ENCODE measurements at regions of chr22 and their contacts with region 1.

Region 1: DNA sequence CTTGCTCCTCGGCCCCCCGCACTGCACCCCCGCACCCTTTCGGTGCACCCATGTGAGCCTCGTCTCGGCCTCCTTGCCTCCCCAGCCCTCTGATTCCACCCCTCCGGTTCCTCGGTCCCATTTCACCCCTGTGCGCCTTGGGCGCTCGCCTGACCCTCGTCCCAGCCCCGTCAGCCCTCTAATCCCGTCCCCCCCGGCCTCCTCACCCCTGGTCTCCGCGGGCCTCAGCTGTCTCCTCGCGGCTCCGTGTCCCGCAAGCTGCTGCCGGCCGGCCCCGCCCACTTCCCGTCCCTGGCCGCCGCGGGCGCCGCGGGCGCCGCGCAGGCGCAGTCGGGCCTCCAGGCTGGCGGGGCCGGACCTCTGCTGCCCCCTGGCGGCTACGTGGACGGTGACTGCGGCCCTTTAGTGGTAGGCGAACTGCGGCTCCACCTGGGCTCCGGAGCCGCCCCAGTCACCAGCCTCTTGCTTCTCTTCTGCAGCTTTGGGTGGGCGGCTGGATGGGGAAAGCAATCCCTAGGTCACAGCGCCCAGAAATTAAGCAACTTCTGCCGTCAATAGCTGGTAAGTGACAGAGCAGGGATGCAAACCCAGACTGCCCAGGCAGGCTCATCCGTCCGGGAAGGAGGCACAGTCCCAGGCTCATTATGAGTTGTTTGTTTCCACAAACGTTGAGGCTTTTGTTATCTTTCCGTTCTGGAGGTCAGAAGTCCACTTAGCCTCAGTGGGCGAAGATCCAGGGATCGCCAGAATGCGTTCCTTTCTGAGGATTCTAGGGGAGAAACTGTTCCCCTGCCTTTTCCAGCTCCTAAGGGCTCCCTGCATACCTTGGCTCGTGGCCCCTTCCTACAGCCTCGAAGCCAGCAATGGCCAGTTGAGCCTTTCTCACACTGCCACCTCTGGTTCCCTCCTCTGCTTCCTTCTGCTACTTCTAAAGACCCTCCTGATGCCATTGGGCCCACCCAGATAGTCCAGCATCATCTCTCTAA is at the start of gene PPM1F:
- DNase-seq: peak; percentile 88
- H3K4me3 Mint-ChIP-seq: peak within 1 kb of the TSS; percentile 79
- H3K27ac Mint-ChIP-seq: peak within 1 kb of the TSS; percentile 79
- H3K4me1 Mint-ChIP-seq: peaks cover 6% of the 10 kb centered on the region
- H3K27me3 Mint-ChIP-seq: no peaks in the 10 kb centered on the region
- total RNA-seq, gene PPM1F: 28.5 and 28.7 TPM in 2 replicates

Region 2: GRCh38 chr22:21666786-21667185 is 286.1 kb before region 1 on chr22:
- intact Hi-C with region 1: loop called (anchors 5 kb)
- DNase-seq: no peak
- H3K4me3 Mint-ChIP-seq: peak overlapping the region; percentile 99
- H3K27ac Mint-ChIP-seq: peak overlapping the region; percentile 97
- H3K4me1 Mint-ChIP-seq: peaks cover 30% of the 10 kb centered on the region
- H3K27me3 Mint-ChIP-seq: no peaks in the 10 kb centered on the region

Region 3: GRCh38 chr22:21712894-21713712 is 239.8 kb before region 1 on chr22:
- intact Hi-C with region 1: loop called (anchors 2 kb)
- DNase-seq: peak; percentile 36
- H3K4me3 Mint-ChIP-seq: no peak overlapping the region
- H3K27ac Mint-ChIP-seq: no peak overlapping the region
- H3K4me1 Mint-ChIP-seq: peaks cover 7% of the 10 kb centered on the region
- H3K27me3 Mint-ChIP-seq: peaks cover 9% of the 10 kb centered on the region

Region 4: GRCh38 chr22:21726650-21727049 is 226.2 kb before region 1 on chr22:
- intact Hi-C with region 1: loop called (anchors 5 kb)
- DNase-seq: peak; percentile 38
- H3K4me3 Mint-ChIP-seq: no peak overlapping the region
- H3K27ac Mint-ChIP-seq: no peak overlapping the region
- H3K4me1 Mint-ChIP-seq: peaks cover 16% of the 10 kb centered on the region
- H3K27me3 Mint-ChIP-seq: no peaks in the 10 kb centered on the region

Region 5: GRCh38 chr22:21816787-21817496 is 135.9 kb before region 1 on chr22:
- intact Hi-C with region 1: loop called (anchors 5 kb)
- DNase-seq: peak; percentile 42
- H3K4me3 Mint-ChIP-seq: peak overlapping the region; percentile 65
- H3K27ac Mint-ChIP-seq: peak overlapping the region; percentile 96
- H3K4me1 Mint-ChIP-seq: peaks cover 47% of the 10 kb centered on the region
- H3K27me3 Mint-ChIP-seq: no peaks in the 10 kb centered on the region

Region 6: DNA sequence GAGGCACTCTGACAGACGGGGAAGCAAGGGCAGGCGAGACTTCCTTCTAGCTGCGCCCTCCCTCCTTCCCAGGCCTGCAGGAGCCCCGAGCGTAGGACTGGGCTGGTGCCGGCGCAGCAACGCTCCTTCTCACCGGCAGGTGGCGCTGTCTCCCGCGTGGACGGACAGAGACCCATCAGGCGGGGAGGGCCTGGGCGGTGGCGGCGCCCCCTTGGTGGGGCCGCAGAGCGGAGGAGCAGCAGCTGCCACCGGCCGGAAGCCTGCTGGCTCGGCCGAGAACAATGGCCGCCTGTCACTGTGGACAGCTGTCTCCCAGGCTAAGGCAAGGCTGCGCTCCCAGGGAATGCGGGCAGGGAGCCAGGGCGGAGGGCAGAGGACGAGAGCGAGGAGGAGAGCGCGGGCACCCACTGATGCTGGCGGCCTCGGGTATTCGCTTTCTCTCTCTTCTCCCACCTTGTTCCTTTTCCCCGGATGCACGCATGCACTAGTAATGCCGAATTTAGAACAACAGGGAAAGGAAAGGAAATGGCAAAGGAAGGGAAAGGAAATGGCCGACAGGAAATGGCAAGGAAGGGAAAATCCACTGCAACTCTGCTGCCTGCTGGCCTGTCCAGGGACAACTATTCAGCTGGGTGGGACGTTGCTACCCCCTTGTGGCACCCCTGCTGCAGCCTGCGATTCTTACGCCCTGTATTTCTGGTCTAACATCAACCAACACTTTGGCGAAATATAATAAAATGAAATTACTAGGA is 14.6 kb before region 1 on chr22:
- intact Hi-C with region 1: loop called (anchors 2 kb)
- DNase-seq: peak; percentile 87
- H3K4me3 Mint-ChIP-seq: peak overlapping the region; percentile 75
- H3K27ac Mint-ChIP-seq: peak overlapping the region; percentile 67
- H3K4me1 Mint-ChIP-seq: peaks cover 44% of the 10 kb centered on the region
- H3K27me3 Mint-ChIP-seq: peaks cover 1% of the 10 kb centered on the region

Measured in activated T-helper 1 cell treated with anti-CD3 and anti-CD28 coated beads, Interleukin-12 subunit alpha, Interleukin-12 subunit beta, Interleukin-2, Interleukin-4 antibody, amounts not matched to agents 30 ng/mL and 10 ng/mL and 1 ng/mL, durations not matched to agents 14 hours and 24 hours and 36 hours (primary cell).